Stomach (tissue), 19 donors: ENCODE measurements at regions of chr12 and their contacts with region 1.

Region 1: GRCh38 chr12:54404061-54405004 is 14.7 kb downstream of the ITGA5 start:
- DNase-seq: peak; percentile 68 to 73
- H3K4me3 ChIP-seq: no peak overlapping the region
- H3K27ac ChIP-seq: peak overlapping the region in 3 of 5 donors; percentile 5 to 40 (median 38)
- H3K4me1 ChIP-seq: peaks cover 0 to 20% (median 0%) of the 10 kb centered on the region in 4 donors
- H3K27me3 ChIP-seq: no peaks in the 10 kb centered on the region
- CTCF ChIP-seq: peak in 5 of 7 experiments; percentile 63 to 96 (median 90)
- EP300 ChIP-seq: no peak
- POLR2A ChIP-seq: no peak

Region 2: GRCh38 chr12:54439521-54440255 is 35.4 kb after region 1 on chr12:
- intact Hi-C with region 1: loop called (anchors 5 kb)
- DNase-seq: peak in 1 of 2 donors; percentile 78
- H3K4me3 ChIP-seq: no peak overlapping the region
- H3K27ac ChIP-seq: no peak overlapping the region
- H3K4me1 ChIP-seq: peaks cover 0 to 7% (median 5%) of the 10 kb centered on the region in 4 donors
- H3K27me3 ChIP-seq: peaks cover 0 to 3% (median 0%) of the 10 kb centered on the region in 3 donors
- CTCF ChIP-seq: peak in 5 of 7 experiments; percentile 64 to 79 (median 69)
- EP300 ChIP-seq: no peak
- POLR2A ChIP-seq: no peak

Region 3: DNA sequence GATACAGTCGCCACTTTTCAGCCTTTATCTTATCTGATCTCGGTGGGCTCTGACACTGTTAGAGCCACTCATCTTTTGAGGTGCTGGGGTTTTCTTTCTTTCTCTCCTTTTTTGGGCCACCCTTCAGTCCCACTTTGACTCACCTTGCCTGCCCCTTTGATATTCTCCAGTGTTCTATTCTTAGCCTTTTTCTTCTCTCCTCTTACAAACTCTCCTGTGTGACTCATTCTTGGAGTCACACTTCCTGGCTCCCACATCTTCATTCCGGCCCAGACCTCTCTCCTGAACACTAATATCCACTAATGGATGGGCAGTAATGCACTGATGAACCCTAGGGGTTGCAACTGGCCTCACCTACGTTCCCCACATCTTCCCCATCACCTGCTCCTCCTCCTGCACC is 246.1 kb after region 1 on chr12:
- intact Hi-C with region 1: no loop called
- DNase-seq: no peak
- H3K4me3 ChIP-seq: no peak overlapping the region
- H3K27ac ChIP-seq: no peak overlapping the region
- H3K4me1 ChIP-seq: no peaks in the 10 kb centered on the region
- H3K27me3 ChIP-seq: peaks cover 0 to 8% (median 0%) of the 10 kb centered on the region in 3 donors
- CTCF ChIP-seq: no peak
- EP300 ChIP-seq: no peak
- POLR2A ChIP-seq: no peak

Region 4: DNA sequence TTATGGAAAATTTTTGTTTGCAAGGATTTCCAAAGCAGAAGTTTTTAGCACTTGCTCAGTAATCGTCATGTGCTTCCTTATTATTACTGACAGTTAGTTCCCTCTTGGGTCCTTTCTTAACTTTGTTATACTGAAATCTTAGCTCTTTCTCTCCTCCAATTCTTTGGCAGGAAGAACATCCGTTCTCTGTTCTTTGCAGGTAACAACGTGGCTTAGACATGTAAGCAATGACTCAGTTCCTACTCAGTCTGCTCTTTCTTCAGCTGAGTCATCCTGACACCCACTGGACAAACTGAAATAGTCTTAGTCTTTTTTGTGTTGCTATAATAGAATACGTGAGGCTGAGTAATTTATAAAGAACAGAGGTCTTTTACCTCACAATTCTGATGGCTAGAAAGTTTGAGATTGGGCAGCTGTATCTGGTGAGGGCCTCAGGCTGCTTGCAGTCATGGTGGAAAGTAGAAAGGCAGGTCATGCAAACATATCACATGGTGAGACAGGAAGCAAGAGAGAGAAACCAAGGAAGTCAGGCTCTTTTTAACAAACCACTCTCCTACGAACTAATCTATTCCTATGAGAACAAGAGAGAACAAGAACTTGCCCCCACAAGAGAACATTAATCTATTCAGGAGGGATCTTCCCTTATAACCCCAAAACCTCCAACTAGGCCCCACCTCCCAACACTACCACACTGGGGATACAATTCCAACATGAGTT is 531.1 kb after region 1 on chr12:
- intact Hi-C with region 1: no loop called
- DNase-seq: peak in 1 of 2 donors; percentile 56
- H3K4me3 ChIP-seq: no peak overlapping the region
- H3K27ac ChIP-seq: peak overlapping the region in 3 of 5 donors; percentile 22 to 71 (median 51)
- H3K4me1 ChIP-seq: peaks cover 10 to 31% (median 13%) of the 10 kb centered on the region in 4 donors
- H3K27me3 ChIP-seq: no peaks in the 10 kb centered on the region
- CTCF ChIP-seq: no peak
- EP300 ChIP-seq: no peak
- POLR2A ChIP-seq: no peak